Heart left ventricle (tissue), 16 donors: ENCODE measurements at regions of chr4 and their contacts with region 1.

Region 1: DNA sequence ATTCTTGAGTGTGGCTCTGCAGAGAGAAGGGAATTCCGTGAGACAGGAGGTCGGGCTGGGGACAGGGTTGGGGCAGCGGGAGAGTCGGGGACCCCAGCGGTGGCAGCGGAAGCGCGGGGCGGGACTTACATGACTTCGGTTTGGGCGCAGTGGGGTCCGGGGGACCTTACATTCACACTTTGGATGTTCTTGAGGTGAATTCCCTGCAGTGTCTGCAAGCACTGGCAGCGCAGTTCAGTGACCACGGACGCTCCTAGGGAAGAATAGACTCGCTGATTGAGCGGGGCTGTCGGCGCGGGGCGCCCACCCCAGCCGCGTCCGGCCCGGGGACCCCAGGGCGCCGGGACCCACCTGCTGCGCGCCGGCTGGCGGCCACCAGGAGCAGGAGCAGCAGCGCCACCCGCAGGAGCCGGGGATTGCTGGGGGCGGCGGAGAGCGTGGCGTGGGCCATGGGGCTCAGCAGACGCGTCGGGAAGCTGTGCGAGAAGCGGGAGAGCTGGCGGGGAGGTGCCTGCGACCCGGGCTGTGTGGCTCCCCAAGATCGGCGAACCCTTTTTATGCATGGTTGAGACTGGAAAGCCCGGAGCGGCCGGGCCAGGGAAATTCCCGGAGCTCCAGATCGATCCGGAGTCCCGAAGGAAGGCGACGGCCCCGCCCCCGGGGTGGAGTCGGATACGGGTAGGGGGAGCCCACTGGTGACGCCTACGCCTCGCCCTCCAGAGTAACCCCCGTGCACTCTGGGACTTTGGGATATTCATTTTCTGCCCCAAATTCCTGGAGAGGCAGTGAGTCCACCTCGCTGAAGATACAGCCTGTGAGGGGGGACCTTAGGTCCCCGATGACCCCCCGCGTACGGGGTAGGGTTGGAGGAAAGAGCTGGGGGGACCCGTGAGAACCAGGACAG is at the start of gene CXCL3:
- DNase-seq: peak; percentile 68 to 89 (median 80)
- ATAC-seq: peak; percentile 85 to 97 (median 94)
- H3K4me3 ChIP-seq: peak within 1 kb of the TSS; percentile 37 to 83 (median 70)
- H3K27ac ChIP-seq: peak within 1 kb of the TSS; percentile 25 to 87 (median 77)
- H3K4me1 ChIP-seq: peaks cover 0 to 13% (median 3%) of the 10 kb centered on the region in 12 donors
- H3K27me3 ChIP-seq: peaks cover 0 to 9% (median 0%) of the 10 kb centered on the region in 9 donors
- CTCF ChIP-seq: peak in 10 of 12 donors; percentile 14 to 56 (median 44)
- POLR2A ChIP-seq: peak in 1 of 2 donors; percentile 22
- total RNA-seq, gene CXCL3: 0.32 to 8.9 (median 0.97) TPM in 7 of 9 donors, not detected in the others

Region 2: DNA sequence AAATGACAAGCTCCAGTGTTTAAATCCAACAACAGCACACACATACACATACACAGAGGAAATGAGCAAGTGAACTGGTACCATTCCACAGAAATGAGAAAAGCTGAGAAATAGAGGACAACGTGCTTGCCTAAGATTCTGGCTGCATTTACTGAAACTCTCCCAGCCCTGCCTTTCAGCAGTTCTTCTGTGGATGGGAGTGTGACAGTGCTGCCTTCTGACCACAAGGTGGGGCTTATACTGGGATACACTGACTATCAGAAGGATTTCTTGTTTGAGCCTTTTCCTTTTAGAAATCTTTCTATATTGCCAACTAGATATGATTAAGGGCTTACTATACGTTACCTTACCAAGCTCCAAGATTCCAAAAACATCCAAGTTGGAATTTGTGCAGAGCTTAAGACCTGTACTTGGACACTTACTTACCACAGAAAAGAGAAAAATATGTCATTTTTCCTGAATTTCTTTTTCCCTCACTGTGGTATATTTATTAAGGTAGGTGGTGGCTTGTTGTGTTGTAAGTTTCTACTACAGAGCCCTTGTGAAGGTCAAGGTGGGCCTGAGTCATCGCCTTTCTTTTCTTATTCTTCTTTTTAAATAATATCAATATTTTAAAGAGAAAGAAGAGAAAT is 308.8 kb before region 1 on chr4:
- intact Hi-C with region 1: loop called in 4 of 10 experiments (anchors 5 to 10 kb)
- DNase-seq: peak in 4 of 5 donors; percentile 46 to 70 (median 62)
- ATAC-seq: peak; percentile 80 to 93 (median 88)
- H3K4me3 ChIP-seq: no peak overlapping the region
- H3K27ac ChIP-seq: peak overlapping the region in 1 of 12 donors; percentile 6
- H3K4me1 ChIP-seq: peaks cover 0 to 67% (median 17%) of the 10 kb centered on the region in 12 donors
- H3K27me3 ChIP-seq: no peaks in the 10 kb centered on the region
- CTCF ChIP-seq: peak; percentile 71 to 90 (median 81)
- POLR2A ChIP-seq: no peak

Region 3: DNA sequence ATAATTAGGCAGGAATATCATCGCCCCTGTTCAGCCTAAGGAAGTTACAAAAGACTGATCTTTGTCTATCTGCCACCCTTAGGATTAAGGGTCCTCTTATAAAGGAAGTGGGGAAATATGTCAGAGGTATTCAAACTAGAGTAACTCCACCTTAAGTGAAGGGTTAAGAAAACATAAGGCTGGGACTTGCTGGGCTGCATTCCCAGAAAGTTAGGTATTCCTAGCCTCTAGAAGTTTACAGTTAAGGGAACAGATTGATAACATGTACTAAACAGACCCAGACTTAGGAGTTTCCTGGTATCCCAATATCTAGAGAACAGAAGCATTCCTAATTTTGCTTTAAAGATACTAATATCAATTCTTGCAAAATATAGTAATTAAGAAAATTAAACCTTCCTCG is 54.5 kb after region 1 on chr4:
- intact Hi-C with region 1: loop called in 5 of 10 experiments (anchors 5 to 10 kb)
- DNase-seq: no peak
- ATAC-seq: no peak
- H3K4me3 ChIP-seq: no peak overlapping the region
- H3K27ac ChIP-seq: no peak overlapping the region
- H3K4me1 ChIP-seq: peaks cover 0 to 17% (median 0%) of the 10 kb centered on the region in 12 donors
- H3K27me3 ChIP-seq: no peaks in the 10 kb centered on the region
- CTCF ChIP-seq: no peak
- POLR2A ChIP-seq: no peak

Region 4: GRCh38 chr4:74098450-74098994 is 60.1 kb after region 1 on chr4:
- intact Hi-C with region 1: loop called in 6 of 10 experiments (anchors 5 to 10 kb)
- DNase-seq: peak in 3 of 5 donors; percentile 26 to 52 (median 38)
- ATAC-seq: peak in 1 of 4 donors; percentile 21
- H3K4me3 ChIP-seq: peak overlapping the region; percentile 38 to 78 (median 65)
- H3K27ac ChIP-seq: peak overlapping the region; percentile 70 to 91 (median 85)
- H3K4me1 ChIP-seq: peaks cover 0 to 19% (median 2%) of the 10 kb centered on the region in 12 donors
- H3K27me3 ChIP-seq: peaks cover 0 to 5% (median 0%) of the 10 kb centered on the region in 9 donors
- CTCF ChIP-seq: no peak
- POLR2A ChIP-seq: no peak

Region 5: DNA sequence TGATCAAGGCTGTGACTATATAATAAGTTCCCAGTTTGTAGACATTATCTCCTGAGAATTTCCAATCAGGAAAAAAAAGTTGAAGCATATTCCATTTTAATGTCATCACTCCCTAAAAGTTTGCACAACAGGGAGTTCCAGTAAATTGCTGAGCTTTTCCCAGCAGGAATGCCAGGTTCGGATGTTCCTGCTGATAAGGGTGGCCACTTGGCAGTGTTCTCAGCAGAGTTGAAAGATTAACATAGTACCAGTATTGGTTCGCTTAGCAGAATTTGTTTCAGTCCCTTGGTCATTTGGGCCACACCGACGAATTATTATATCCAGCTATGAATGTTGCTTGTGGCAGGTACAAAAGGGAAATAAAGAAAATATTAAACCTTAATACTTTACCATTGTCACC is 65.7 kb after region 1 on chr4:
- intact Hi-C with region 1: loop called in 4 of 10 experiments (anchors 5 to 10 kb)
- DNase-seq: no peak
- ATAC-seq: no peak
- H3K4me3 ChIP-seq: no peak overlapping the region
- H3K27ac ChIP-seq: peak overlapping the region in 1 of 12 donors; percentile 21
- H3K4me1 ChIP-seq: peaks cover 0 to 40% (median 23%) of the 10 kb centered on the region in 12 donors
- H3K27me3 ChIP-seq: peaks cover 0 to 5% (median 0%) of the 10 kb centered on the region in 9 donors
- CTCF ChIP-seq: no peak
- POLR2A ChIP-seq: no peak

Region 6: GRCh38 chr4:74123065-74123728 is 84.8 kb after region 1 on chr4:
- intact Hi-C with region 1: no loop called
- DNase-seq: peak in 1 of 5 donors; percentile 30
- ATAC-seq: peak; percentile 64 to 78 (median 70)
- H3K4me3 ChIP-seq: no peak overlapping the region
- H3K27ac ChIP-seq: no peak overlapping the region
- H3K4me1 ChIP-seq: peaks cover 0 to 11% (median under 1%) of the 10 kb centered on the region in 12 donors
- H3K27me3 ChIP-seq: no peaks in the 10 kb centered on the region
- CTCF ChIP-seq: no peak
- POLR2A ChIP-seq: no peak